ENCODE measurements at regions of chr20 and their contacts with region 1.

Region 1: DNA sequence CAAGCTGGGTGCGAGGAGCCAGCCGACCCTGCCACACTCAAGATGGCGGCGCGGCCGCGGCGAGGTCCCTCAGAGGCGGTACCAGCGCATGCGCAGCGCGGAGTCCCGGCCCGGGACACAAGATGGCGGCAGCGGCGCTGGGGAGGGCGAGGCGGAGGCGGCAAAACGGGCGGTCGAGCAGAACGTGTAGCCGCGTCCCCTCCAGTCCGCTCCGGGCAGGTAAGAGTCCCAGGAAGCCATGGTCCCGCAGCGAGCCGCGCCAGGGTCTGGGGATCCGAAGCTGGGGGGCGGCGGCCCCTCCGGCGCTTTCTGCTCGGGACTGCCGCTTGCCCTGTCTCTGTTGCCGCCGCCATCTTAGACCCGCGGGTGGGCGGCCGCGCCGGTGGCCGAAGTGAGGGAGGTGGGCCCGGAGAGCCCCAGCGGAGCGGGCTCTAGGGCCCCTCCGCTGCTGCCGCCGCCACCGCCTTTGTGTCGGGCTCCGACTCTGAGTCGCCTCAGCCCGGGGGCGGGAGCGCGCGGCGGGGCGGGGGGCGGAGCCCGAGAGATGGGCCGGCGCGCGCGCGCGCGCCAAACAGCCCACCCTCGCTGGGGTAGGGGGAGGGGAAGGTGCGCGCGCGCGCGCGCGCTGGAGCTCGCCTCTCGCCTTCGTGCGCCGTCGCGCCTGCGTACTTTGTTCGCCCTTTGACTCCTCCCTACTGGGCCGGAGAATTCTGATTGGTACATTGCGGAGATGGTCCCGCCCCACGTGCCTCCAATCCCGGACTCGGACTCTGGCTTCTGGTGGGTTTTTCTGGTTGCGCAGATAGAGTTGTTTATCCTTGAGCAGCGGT is at the start of gene PCIF1:
- DNase-seq: peak; percentile 99
- H3K4me3 Mint-ChIP-seq: peak within 1 kb of the TSS; percentile 99
- H3K27ac Mint-ChIP-seq: peak within 1 kb of the TSS; percentile 99
- H3K4me1 Mint-ChIP-seq: peaks cover 21% of the 10 kb centered on the region
- H3K27me3 Mint-ChIP-seq: no peaks in the 10 kb centered on the region
- total RNA-seq, gene PCIF1: 26.1 and 27.8 TPM in 2 replicates

Region 2: GRCh38 chr20:45812157-45813020 is 122.4 kb before region 1 on chr20 and contains the start of gene UBE2C:
- intact Hi-C with region 1: loop called (anchors 5 kb)
- DNase-seq: peak; percentile 98
- H3K4me3 Mint-ChIP-seq: peak within 1 kb of the TSS; percentile 89
- H3K27ac Mint-ChIP-seq: peak within 1 kb of the TSS; percentile 90
- H3K4me1 Mint-ChIP-seq: peaks cover 27% of the 10 kb centered on the region
- H3K27me3 Mint-ChIP-seq: no peaks in the 10 kb centered on the region
- total RNA-seq, gene UBE2C: 113 and 115 TPM in 2 replicates

Region 3: GRCh38 chr20:45880988-45881788 is 53.6 kb before region 1 on chr20 and contains the start of gene ZSWIM1:
- intact Hi-C with region 1: loop called (anchors 1 kb)
- DNase-seq: peak; percentile 100
- H3K4me3 Mint-ChIP-seq: peak within 1 kb of the TSS; percentile 92
- H3K27ac Mint-ChIP-seq: peak within 1 kb of the TSS; percentile 82
- H3K4me1 Mint-ChIP-seq: peaks cover 33% of the 10 kb centered on the region
- H3K27me3 Mint-ChIP-seq: no peaks in the 10 kb centered on the region
- total RNA-seq, gene ZSWIM1: 9.4 and 10.4 TPM in 2 replicates

Region 4: DNA sequence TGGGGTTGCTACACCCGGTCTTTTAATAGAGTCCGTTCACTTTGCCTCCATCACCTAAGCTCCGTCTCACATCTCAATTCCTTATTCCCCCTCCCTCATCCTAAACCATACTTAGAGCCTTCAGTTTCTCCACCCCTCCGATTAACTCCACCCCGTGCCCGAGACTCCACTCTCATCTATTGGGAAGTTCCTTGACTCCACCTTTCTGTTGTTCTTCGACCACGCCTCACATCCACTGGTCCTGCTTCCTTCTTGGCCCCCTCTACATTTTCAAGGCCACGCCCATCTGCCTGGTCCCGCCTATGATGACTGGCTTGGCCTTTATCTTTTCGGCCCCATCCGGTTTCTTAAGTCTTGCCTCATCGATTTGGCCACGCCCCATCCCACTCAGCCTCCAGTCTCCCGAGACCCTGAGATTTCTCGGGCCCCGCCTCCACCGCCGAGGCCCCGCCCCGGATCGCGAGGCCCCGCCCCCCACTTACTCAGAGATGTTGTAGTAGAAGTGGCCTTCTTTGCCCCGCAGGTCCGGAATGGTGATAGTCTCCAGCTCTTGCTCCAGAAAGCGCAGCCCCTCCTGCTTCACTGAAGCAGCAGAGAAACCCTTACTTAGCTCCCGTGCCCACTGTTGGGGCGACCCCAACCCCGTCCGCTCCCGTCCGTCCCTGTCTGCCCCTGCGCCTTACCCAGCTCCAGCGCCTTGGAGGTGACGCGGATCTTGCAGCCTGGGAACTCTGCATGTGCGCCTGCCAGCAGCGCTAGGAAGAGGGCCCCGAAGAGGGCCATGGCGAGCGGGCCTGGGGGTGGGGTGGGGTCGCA is 23.9 kb before region 1 on chr20:
- intact Hi-C with region 1: loop called (anchors 1 kb)
- DNase-seq: peak; percentile 96
- H3K4me3 Mint-ChIP-seq: peak overlapping the region; percentile 84
- H3K27ac Mint-ChIP-seq: peak overlapping the region; percentile 86
- H3K4me1 Mint-ChIP-seq: peaks cover 11% of the 10 kb centered on the region
- H3K27me3 Mint-ChIP-seq: peaks cover 5% of the 10 kb centered on the region

Region 5: GRCh38 chr20:46013826-46014516 is 79.2 kb after region 1 on chr20:
- intact Hi-C with region 1: no loop called
- DNase-seq: peak; percentile 90
- H3K4me3 Mint-ChIP-seq: peak overlapping the region; percentile 69
- H3K27ac Mint-ChIP-seq: peak overlapping the region; percentile 59
- H3K4me1 Mint-ChIP-seq: peaks cover 44% of the 10 kb centered on the region
- H3K27me3 Mint-ChIP-seq: peaks cover 58% of the 10 kb centered on the region

Region 6: DNA sequence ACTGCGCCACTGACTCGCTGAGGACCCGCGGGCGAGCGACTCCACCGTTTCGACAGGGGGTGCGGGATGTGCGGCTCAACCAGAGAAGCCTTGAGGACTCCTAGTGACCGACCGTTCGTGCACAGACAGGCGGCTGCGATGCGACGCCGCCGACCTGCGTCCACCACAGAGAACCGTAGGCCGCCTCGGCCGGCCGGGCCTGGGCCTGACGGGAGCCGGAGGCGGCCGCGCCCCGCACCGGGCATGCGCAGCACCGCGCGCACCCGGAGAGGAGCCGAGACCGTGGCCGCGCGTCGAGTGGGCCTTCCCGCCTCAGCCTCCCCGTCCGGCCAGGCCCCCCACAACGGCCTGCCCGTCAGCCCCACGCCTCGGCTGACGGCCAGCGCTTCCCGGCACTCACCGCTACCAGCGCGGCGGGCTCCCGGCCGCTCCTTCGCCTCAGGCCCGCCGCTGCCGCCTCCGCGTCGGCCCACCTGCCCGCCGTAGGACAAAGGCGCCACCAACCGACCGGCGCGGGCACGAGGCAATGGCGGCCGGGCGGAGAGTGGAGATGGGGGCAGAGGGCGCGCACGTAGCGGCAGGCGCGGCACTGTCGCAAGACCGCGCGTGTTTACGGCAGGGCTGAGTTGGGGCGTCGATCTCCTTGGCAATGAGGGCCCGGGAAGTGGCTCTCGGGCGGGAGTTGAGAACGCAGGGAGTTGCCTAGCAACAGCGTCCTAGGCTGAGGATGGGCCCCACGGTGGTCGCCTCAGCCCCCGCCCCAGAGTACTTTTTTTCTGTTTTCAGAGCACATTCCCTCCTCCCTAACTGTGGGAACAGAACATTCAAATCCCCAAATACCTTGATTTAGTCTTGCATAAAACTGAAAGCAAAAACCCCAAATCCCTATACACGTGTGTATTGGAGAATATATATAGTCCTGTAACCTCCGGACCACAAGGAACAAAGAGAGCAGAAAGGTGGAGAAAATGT is 154.9 kb after region 1 on chr20 and contains the start of gene NCOA5:
- intact Hi-C with region 1: loop called (anchors 1 kb)
- DNase-seq: peak; percentile 98
- H3K4me3 Mint-ChIP-seq: peak within 1 kb of the TSS; percentile 89
- H3K27ac Mint-ChIP-seq: peak within 1 kb of the TSS; percentile 92
- H3K4me1 Mint-ChIP-seq: peaks cover 27% of the 10 kb centered on the region
- H3K27me3 Mint-ChIP-seq: peaks cover 2% of the 10 kb centered on the region
- total RNA-seq, gene NCOA5: 27.6 and 30.3 TPM in 2 replicates

Region 7: GRCh38 chr20:46174469-46175128 is 239.8 kb after region 1 on chr20:
- intact Hi-C with region 1: no loop called
- DNase-seq: peak; percentile 90
- H3K4me3 Mint-ChIP-seq: no peak overlapping the region
- H3K27ac Mint-ChIP-seq: no peak overlapping the region
- H3K4me1 Mint-ChIP-seq: no peaks in the 10 kb centered on the region
- H3K27me3 Mint-ChIP-seq: peaks cover 41% of the 10 kb centered on the region

Measured in activated CD4-positive, alpha-beta T cell treated with anti-CD3 and anti-CD28 coated beads, Interleukin-2, amount 10 ng/mL, durations not matched to agents 24 days and 14 days (primary cell).